PC-3 (cell line): ENCODE measurements at regions of chr11 and their contacts with region 1.

Region 1: GRCh38 chr11:75668451-75669297 is at the start of gene MAP6:
- DNase-seq: peak; percentile 39
- ATAC-seq: peak; percentile 40
- H3K4me3 ChIP-seq: peak within 1 kb of the TSS; percentile 70
- H3K27ac ChIP-seq: no peak within 1 kb of the TSS
- H3K4me1 ChIP-seq: 0 out of 2 replicates have a peak, but pooled peaks cover 4% of the 10 kb centered on the region
- H3K27me3 ChIP-seq: peaks cover 30% of the 10 kb centered on the region
- CTCF ChIP-seq: no peak
- total RNA-seq, gene MAP6: 0.47 and 1.3 TPM in 2 replicates

Region 2: GRCh38 chr11:76394411-76394810 is 725.7 kb after region 1 on chr11:
- CTCF ChIA-PET with region 1: no interaction called
- POLR2A ChIA-PET with region 1: interaction called, 10 read pairs
- intact Hi-C with region 1: no loop called
- DNase-seq: no peak
- ATAC-seq: no peak
- H3K4me3 ChIP-seq: no peak overlapping the region
- H3K27ac ChIP-seq: no peak overlapping the region
- H3K4me1 ChIP-seq: no peaks in the 10 kb centered on the region
- H3K27me3 ChIP-seq: no peaks in the 10 kb centered on the region
- CTCF ChIP-seq: no peak